H1 (cell line): ENCODE measurements at regions of chr11 and their contacts with region 1.

Region 1: GRCh38 chr11:14907411-14908213 is 15.6 kb upstream of the CYP2R1 start:
- DNase-seq: peak in 1 of 2 experiments; percentile 94
- H3K4me3 ChIP-seq: no peak overlapping the region
- H3K27ac ChIP-seq: no peak overlapping the region
- H3K4me1 ChIP-seq: peaks cover 0 to 11% (median under 1%) of the 10 kb centered on the region in 4 experiments; a peak in 4 of 7 replicates
- H3K27me3 ChIP-seq: peaks cover 0 to 7% (median 0%) of the 10 kb centered on the region in 4 experiments; a peak in 3 of 7 replicates
- CTCF ChIP-seq: peak; percentile 78 to 86 (median 80)
- EP300 ChIP-seq: no peak
- POLR2A ChIP-seq: no peak
- RAD21 ChIP-seq: peak; percentile 57 to 60

Region 2: DNA sequence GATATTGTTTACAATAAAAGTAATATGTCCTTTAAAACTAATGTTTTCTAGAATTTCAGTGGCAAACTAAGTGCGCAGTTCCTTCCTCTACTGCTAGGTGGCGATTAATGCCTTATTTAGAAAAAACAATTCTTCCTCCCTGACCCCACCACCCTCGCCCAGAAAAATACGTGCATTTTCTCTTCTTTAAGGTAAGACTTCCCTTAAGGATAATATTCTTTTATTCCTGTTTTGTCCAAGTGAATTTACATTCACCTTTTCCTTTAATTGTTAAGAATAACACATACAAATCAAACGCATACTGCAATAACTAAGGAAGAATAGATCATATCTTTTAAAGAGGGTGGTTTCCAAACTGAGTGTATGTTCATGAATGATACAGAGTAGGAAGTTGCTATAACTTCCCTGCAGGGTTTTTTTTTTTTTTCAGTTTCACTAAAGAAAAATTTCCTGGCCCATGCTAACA is 370.4 kb before region 1 on chr11:
- CTCF ChIA-PET with region 1: interaction called, 21 read pairs
- POLR2A ChIA-PET with region 1: no interaction called
- DNase-seq: no peak
- H3K4me3 ChIP-seq: no peak overlapping the region
- H3K27ac ChIP-seq: no peak overlapping the region
- H3K4me1 ChIP-seq: peaks cover 2 to 6% (median 5%) of the 10 kb centered on the region in 4 experiments
- H3K27me3 ChIP-seq: no peaks in the 10 kb centered on the region; a peak in 2 of 7 replicates
- CTCF ChIP-seq: peak in 2 of 3 experiments; percentile 41 to 63; a peak in 2 of 4 replicates
- EP300 ChIP-seq: no peak
- POLR2A ChIP-seq: no peak
- RAD21 ChIP-seq: peak; percentile 67 to 76

Region 3: GRCh38 chr11:14812757-14813156 is 94.9 kb before region 1 on chr11:
- CTCF ChIA-PET with region 1: interaction called, 11 read pairs
- POLR2A ChIA-PET with region 1: no interaction called
- DNase-seq: no peak
- H3K4me3 ChIP-seq: no peak overlapping the region
- H3K27ac ChIP-seq: no peak overlapping the region
- H3K4me1 ChIP-seq: no peaks in the 10 kb centered on the region
- H3K27me3 ChIP-seq: no peaks in the 10 kb centered on the region
- CTCF ChIP-seq: no peak
- EP300 ChIP-seq: no peak
- POLR2A ChIP-seq: no peak
- RAD21 ChIP-seq: no peak

Region 4: DNA sequence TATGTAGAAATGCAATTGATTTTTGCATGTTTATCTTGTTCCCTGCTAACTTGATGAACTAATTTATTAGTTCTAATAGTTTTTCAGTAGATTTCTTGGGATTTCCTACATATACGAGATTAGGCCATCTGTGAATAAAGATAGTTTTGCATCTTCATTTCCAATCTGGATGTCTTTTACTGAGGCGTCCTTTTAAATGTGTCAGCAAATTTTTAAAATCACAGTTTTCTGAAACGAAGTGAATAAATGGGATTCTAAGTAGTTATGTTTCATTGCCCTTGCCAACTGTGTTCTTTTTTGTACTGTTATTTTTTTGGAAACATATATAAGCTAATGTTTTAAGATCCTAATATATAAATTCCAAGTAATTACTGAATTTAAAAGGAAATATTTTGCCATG is 65.6 kb before region 1 on chr11:
- CTCF ChIA-PET with region 1: no interaction called
- POLR2A ChIA-PET with region 1: no interaction called
- DNase-seq: no peak
- H3K4me3 ChIP-seq: no peak overlapping the region
- H3K27ac ChIP-seq: no peak overlapping the region
- H3K4me1 ChIP-seq: no peaks in the 10 kb centered on the region
- H3K27me3 ChIP-seq: no peaks in the 10 kb centered on the region
- CTCF ChIP-seq: no peak
- EP300 ChIP-seq: no peak
- POLR2A ChIP-seq: no peak
- RAD21 ChIP-seq: no peak

Region 5: DNA sequence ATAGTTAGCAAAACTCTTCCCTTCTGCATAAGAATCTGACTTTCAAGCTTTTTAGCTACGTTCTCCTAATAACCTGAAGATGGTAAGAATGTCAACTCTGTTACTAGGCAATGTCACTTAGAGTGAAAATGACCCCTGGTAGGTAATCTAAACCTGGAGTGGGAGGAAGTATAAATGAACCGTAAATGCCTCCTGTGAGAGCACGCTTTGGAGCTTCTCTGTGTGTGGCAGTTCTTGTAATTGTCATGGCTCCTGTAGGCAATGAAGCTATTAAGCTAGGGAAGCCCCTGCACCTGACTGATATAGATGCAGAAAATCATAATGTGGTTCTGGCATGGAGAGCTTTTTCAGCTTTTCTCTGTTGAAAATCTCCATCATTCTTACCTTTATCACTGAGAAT is 35.1 kb after region 1 on chr11:
- CTCF ChIA-PET with region 1: interaction called, 10 read pairs
- POLR2A ChIA-PET with region 1: no interaction called
- DNase-seq: no peak
- H3K4me3 ChIP-seq: no peak overlapping the region
- H3K27ac ChIP-seq: no peak overlapping the region
- H3K4me1 ChIP-seq: no peaks in the 10 kb centered on the region
- H3K27me3 ChIP-seq: no peaks in the 10 kb centered on the region
- CTCF ChIP-seq: no peak
- EP300 ChIP-seq: no peak
- POLR2A ChIP-seq: no peak
- RAD21 ChIP-seq: no peak

Region 6: GRCh38 chr11:15011776-15012175 is 104.2 kb after region 1 on chr11:
- CTCF ChIA-PET with region 1: interaction called, 69 read pairs
- POLR2A ChIA-PET with region 1: no interaction called
- DNase-seq: no peak
- H3K4me3 ChIP-seq: no peak overlapping the region
- H3K27ac ChIP-seq: no peak overlapping the region
- H3K4me1 ChIP-seq: no peaks in the 10 kb centered on the region
- H3K27me3 ChIP-seq: no peaks in the 10 kb centered on the region
- CTCF ChIP-seq: no peak
- EP300 ChIP-seq: no peak
- POLR2A ChIP-seq: no peak
- RAD21 ChIP-seq: no peak

Region 7: GRCh38 chr11:15195454-15196200 is 288.0 kb after region 1 on chr11:
- CTCF ChIA-PET with region 1: interaction called, 13 read pairs
- POLR2A ChIA-PET with region 1: no interaction called
- DNase-seq: peak in 1 of 2 experiments; percentile 22
- H3K4me3 ChIP-seq: no peak overlapping the region
- H3K27ac ChIP-seq: no peak overlapping the region
- H3K4me1 ChIP-seq: no peaks in the 10 kb centered on the region
- H3K27me3 ChIP-seq: no peaks in the 10 kb centered on the region; a peak in 1 of 7 replicates
- CTCF ChIP-seq: no peak
- EP300 ChIP-seq: no peak
- POLR2A ChIP-seq: no peak
- RAD21 ChIP-seq: no peak